ENCODE measurements at regions of chr12 and their contacts with region 1.

Region 1: GRCh38 chr12:50084775-50085614 is at the start of gene SMARCD1:
- DNase-seq: peak; percentile 92
- ATAC-seq: peak; percentile 84
- H3K4me3 ChIP-seq: peak within 1 kb of the TSS; percentile 64 to 97 (median 81)
- H3K4me3 Mint-ChIP-seq: peak within 1 kb of the TSS; percentile 97
- H3K27ac ChIP-seq: peak within 1 kb of the TSS; percentile 87 to 92
- H3K27ac Mint-ChIP-seq: peak within 1 kb of the TSS; percentile 99
- H3K4me1 ChIP-seq: peaks cover 13 to 20% of the 10 kb centered on the region in 2 donors
- H3K4me1 Mint-ChIP-seq: peaks cover 41% of the 10 kb centered on the region
- H3K27me3 ChIP-seq: no peaks in the 10 kb centered on the region
- H3K27me3 Mint-ChIP-seq: no peaks in the 10 kb centered on the region
- CTCF ChIP-seq: no peak
- total RNA-seq, gene SMARCD1: 101 and 104 TPM in 2 replicates

Region 2: DNA sequence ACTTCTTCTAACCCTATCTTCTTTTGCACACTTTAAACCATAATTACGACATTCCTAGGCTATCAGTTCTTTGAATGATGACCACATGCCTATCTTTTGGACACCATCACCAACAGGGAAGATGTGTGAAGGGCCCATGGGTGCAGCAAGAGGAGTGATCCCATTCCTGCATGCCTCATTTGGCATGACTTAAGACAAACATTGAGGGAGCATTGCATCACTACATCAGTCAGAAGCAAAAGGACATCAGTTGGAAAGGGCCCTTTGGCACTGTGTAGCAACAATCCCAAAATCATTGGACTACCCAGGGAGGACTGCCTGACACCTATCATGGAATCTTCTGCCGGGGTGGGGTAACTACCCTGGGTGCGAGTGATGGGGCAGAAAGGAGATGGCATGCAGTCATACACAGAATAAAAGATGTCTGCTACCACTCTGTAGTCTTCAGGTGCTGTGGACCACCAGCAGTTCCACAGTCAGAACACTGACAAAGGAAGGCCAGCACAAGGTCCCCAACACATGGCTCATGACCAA is 354.4 kb before region 1 on chr12:
- CTCF ChIA-PET with region 1: no interaction called
- POLR2A ChIA-PET with region 1: no interaction called
- intact Hi-C with region 1: no loop called
- DNase-seq: no peak
- ATAC-seq: no peak
- H3K4me3 ChIP-seq: no peak overlapping the region
- H3K4me3 Mint-ChIP-seq: no peak overlapping the region
- H3K27ac ChIP-seq: no peak overlapping the region
- H3K27ac Mint-ChIP-seq: no peak overlapping the region
- H3K4me1 ChIP-seq: no peaks in the 10 kb centered on the region
- H3K4me1 Mint-ChIP-seq: no peaks in the 10 kb centered on the region
- H3K27me3 ChIP-seq: peaks cover 0 to 2% (median 0%) of the 10 kb centered on the region in 4 experiments
- H3K27me3 Mint-ChIP-seq: peaks cover 9% of the 10 kb centered on the region
- CTCF ChIP-seq: no peak

Region 3: DNA sequence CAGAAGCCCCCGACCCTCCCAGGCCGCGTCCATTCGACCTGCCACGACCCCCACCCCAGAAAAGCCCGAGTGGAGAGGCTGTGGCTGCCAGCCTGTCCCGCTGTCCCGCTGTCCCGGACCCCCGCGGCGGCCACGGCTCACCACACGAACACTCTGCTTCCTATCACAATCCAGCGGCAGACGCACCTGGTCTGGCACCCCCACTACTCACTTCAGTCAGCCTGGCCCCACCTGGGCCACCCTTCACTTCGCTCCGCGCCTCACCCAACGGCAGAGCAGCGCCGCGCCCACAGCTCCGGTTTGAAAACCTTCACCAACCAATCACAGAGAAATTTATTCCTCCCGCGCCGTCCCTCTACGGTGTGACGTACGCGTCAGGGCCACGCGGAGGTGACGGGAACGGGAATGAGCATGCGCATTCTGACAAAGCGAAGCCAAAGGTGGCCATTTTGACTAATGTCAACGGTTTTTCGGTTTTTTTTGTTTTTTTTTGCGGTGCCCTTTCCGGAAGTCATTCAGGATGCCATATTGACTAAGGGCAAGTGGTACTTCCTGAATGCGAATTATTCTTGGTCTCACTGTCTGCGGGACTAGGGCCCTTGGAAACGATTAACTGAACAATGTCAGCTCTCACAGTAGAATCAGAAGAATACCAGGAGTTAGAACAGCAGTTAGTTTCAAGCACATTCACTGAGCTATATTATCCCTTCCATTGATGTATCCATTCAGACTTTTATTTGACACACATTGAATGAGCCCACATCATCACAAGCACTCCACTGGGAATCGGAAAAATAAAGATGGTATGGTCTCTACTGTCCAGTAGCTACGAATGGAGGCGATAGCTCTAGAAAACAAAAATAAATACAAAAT is 59.6 kb before region 1 on chr12 and contains the start of gene RACGAP1:
- CTCF ChIA-PET with region 1: interaction called, 4 read pairs
- POLR2A ChIA-PET with region 1: interaction called, 6 read pairs
- intact Hi-C with region 1: loop called (anchors 1 kb)
- DNase-seq: peak; percentile 99
- ATAC-seq: peak; percentile 97
- H3K4me3 ChIP-seq: peak within 1 kb of the TSS; percentile 44 to 75 (median 65)
- H3K4me3 Mint-ChIP-seq: peak within 1 kb of the TSS; percentile 94
- H3K27ac ChIP-seq: peak within 1 kb of the TSS; percentile 52 to 63
- H3K27ac Mint-ChIP-seq: peak within 1 kb of the TSS; percentile 85
- H3K4me1 ChIP-seq: peaks cover 8 to 10% of the 10 kb centered on the region in 2 donors
- H3K4me1 Mint-ChIP-seq: peaks cover 17% of the 10 kb centered on the region
- H3K27me3 ChIP-seq: no peaks in the 10 kb centered on the region
- H3K27me3 Mint-ChIP-seq: no peaks in the 10 kb centered on the region
- CTCF ChIP-seq: no peak
- total RNA-seq, gene RACGAP1: 11.3 and 14.2 TPM in 2 replicates

Region 4: GRCh38 chr12:50111693-50112455 is 26.9 kb after region 1 on chr12 and contains the start of gene COX14:
- CTCF ChIA-PET with region 1: interaction called, 343 read pairs
- POLR2A ChIA-PET with region 1: interaction called, 69 read pairs
- intact Hi-C with region 1: loop called (anchors 1 kb)
- DNase-seq: peak; percentile 100
- ATAC-seq: peak; percentile 77
- H3K4me3 ChIP-seq: peak within 1 kb of the TSS; percentile 51 to 99 (median 88)
- H3K4me3 Mint-ChIP-seq: peak within 1 kb of the TSS; percentile 96
- H3K27ac ChIP-seq: peak within 1 kb of the TSS; percentile 85 to 96
- H3K27ac Mint-ChIP-seq: peak within 1 kb of the TSS; percentile 98
- H3K4me1 ChIP-seq: peaks cover 30 to 62% of the 10 kb centered on the region in 2 donors
- H3K4me1 Mint-ChIP-seq: peaks cover 65% of the 10 kb centered on the region
- H3K27me3 ChIP-seq: no peaks in the 10 kb centered on the region
- H3K27me3 Mint-ChIP-seq: no peaks in the 10 kb centered on the region
- CTCF ChIP-seq: peak; percentile 28
- total RNA-seq, gene COX14: 31.8 and 33.8 TPM in 2 replicates

Region 5: DNA sequence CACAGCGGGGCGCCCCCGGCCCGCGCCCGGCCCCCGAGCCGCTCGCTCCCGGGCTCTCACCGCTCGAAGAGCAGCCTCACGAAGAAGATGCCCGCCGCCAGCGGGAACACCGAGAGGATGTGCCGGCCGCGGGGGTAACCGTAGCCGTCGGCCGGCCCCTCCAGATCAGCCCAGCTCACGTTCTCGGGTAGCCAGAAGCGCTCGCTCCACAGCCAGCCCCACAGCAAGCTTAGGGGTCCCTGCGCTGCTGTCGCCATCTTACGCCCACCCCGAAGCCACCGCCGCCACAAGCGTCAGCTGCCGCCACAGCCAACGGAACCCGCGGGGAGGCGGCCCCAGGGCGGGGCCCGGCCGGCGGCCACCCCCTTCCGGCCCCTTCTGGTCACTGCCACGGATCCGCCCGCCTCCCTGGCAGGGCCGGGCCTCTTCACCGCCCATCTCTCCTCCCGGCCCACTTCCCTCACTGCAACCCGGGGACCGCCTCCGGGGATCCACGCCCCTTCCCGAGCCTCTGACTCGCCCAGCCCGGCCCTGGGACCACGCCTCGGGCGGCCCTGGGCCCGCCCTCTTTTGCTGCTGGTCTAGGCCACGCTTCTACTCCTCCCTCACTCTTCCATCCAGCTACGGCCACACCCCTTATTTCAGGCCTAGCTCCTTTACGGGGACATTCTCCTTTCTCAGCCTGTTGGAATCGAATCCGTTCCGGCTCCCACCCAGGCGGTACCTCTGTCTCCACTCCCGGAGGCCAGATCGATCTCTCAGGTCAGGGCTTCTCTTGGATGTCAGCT is 82.2 kb after region 1 on chr12 and contains the start of gene CERS5:
- CTCF ChIA-PET with region 1: interaction called, 35 read pairs
- POLR2A ChIA-PET with region 1: interaction called, 17 read pairs
- intact Hi-C with region 1: loop called (anchors 1 kb)
- DNase-seq: peak; percentile 97
- ATAC-seq: peak; percentile 98
- H3K4me3 ChIP-seq: peak within 1 kb of the TSS; percentile 70 to 99 (median 74)
- H3K4me3 Mint-ChIP-seq: peak within 1 kb of the TSS; percentile 95
- H3K27ac ChIP-seq: peak within 1 kb of the TSS; percentile 83 to 90
- H3K27ac Mint-ChIP-seq: peak within 1 kb of the TSS; percentile 95
- H3K4me1 ChIP-seq: peaks cover 17 to 19% of the 10 kb centered on the region in 2 donors
- H3K4me1 Mint-ChIP-seq: peaks cover 25% of the 10 kb centered on the region
- H3K27me3 ChIP-seq: no peaks in the 10 kb centered on the region
- H3K27me3 Mint-ChIP-seq: no peaks in the 10 kb centered on the region
- CTCF ChIP-seq: no peak
- total RNA-seq, gene CERS5: 70.9 and 72.0 TPM in 2 replicates

Region 6: DNA sequence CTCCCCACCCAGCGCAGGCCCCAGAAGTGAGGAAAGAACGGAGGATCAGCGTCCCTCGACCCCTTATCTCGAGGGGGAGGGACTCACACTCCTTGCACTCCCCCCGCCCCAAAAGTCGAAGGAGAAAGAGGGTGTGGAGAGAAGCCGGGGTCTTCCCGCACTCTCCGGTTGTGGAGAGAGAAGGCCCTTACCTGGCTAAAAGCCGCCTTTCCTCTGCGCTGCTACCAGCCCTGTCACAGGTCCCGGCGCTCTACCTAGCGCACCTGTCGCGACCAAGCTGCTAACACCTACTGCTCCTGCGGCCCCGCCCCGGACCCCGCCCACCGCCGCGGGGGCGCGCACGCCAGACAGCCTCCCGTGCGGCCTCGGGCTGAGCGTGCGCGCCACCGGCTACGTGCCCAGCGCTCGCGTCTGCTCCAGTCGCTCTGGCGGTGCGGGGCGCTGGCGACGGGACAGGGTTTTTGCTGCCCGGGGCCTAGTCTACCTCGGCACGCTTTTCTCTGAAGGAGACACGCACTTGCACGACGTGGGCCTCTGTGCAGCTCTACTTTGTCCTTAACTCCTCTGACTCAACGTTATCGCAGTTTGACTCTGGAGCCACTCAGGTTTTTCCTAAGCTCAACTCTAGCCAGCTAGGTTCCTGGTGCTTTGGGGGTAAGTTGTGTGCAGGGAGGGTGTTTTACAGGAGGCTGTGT is 198.4 kb after region 1 on chr12 and contains the start of gene LIMA1:
- CTCF ChIA-PET with region 1: interaction called, 3 read pairs
- POLR2A ChIA-PET with region 1: interaction called, 4 read pairs
- intact Hi-C with region 1: loop called (anchors 1 kb)
- DNase-seq: peak; percentile 93
- ATAC-seq: peak; percentile 98
- H3K4me3 ChIP-seq: peak within 1 kb of the TSS; percentile 61 to 86 (median 80)
- H3K4me3 Mint-ChIP-seq: peak within 1 kb of the TSS; percentile 95
- H3K27ac ChIP-seq: peak within 1 kb of the TSS; percentile 19 to 74
- H3K27ac Mint-ChIP-seq: peak within 1 kb of the TSS; percentile 83
- H3K4me1 ChIP-seq: peaks cover 11 to 18% of the 10 kb centered on the region in 2 donors
- H3K4me1 Mint-ChIP-seq: peaks cover 13% of the 10 kb centered on the region
- H3K27me3 ChIP-seq: peaks cover 0 to 8% (median 0%) of the 10 kb centered on the region in 4 experiments
- H3K27me3 Mint-ChIP-seq: peaks cover 4% of the 10 kb centered on the region
- CTCF ChIP-seq: peak; percentile 47
- total RNA-seq, gene LIMA1: 2.1 and 2.9 TPM in 2 replicates

Measured in B cell (primary cell).